ENCODE measurements at regions of chr1 and their contacts with region 1.

Region 1: GRCh38 chr1:205664376-205665108 is 15.8 kb downstream of the SLC45A3 start:
- DNase-seq: peak in 1 of 3 donors; percentile 47
- ATAC-seq: no peak
- H3K4me3 ChIP-seq: no peak overlapping the region
- H3K27ac ChIP-seq: no peak overlapping the region
- H3K4me1 ChIP-seq: peaks cover 7% of the 10 kb centered on the region
- H3K27me3 ChIP-seq: no peaks in the 10 kb centered on the region

Region 2: GRCh38 chr1:205711104-205712020 is 46.8 kb after region 1 on chr1:
- intact Hi-C with region 1: loop called (anchors 2 to 5 kb)
- DNase-seq: peak in 1 of 3 donors; percentile 25
- ATAC-seq: peak; percentile 78 to 79
- H3K4me3 ChIP-seq: no peak overlapping the region
- H3K27ac ChIP-seq: no peak overlapping the region
- H3K4me1 ChIP-seq: peaks cover 7% of the 10 kb centered on the region
- H3K27me3 ChIP-seq: no peaks in the 10 kb centered on the region

Region 3: GRCh38 chr1:205792481-205792881 is 127.9 kb after region 1 on chr1:
- intact Hi-C with region 1: no loop called
- DNase-seq: no peak
- ATAC-seq: no peak
- H3K4me3 ChIP-seq: no peak overlapping the region
- H3K27ac ChIP-seq: no peak overlapping the region
- H3K4me1 ChIP-seq: no peaks in the 10 kb centered on the region
- H3K27me3 ChIP-seq: no peaks in the 10 kb centered on the region